HAP-1 (cell line): ENCODE measurements at regions of chr1 and their contacts with region 1.

Region 1: GRCh38 chr1:54519709-54520108 is 28.3 kb upstream of the ACOT11 start:
- DNase-seq: peak in 1 of 2 experiments; percentile 27
- H3K4me3 ChIP-seq: no peak overlapping the region
- H3K4me1 ChIP-seq: no peaks in the 10 kb centered on the region
- H3K27me3 ChIP-seq: no peaks in the 10 kb centered on the region

Region 2: GRCh38 chr1:54663725-54664124 is 144.0 kb after region 1 on chr1:
- in situ Hi-C with region 1: no loop called
- DNase-seq: no peak
- H3K4me3 ChIP-seq: no peak overlapping the region
- H3K4me1 ChIP-seq: peaks cover 3% of the 10 kb centered on the region; the same call in 1 of the 2 replicates
- H3K27me3 ChIP-seq: no peaks in the 10 kb centered on the region

Region 3: GRCh38 chr1:54791880-54792522 is 272.3 kb after region 1 on chr1:
- in situ Hi-C with region 1: loop called (anchors 10 kb)
- DNase-seq: peak in 1 of 2 experiments; percentile 64
- H3K4me3 ChIP-seq: no peak overlapping the region
- H3K4me1 ChIP-seq: no peaks in the 10 kb centered on the region
- H3K27me3 ChIP-seq: peaks cover 3% of the 10 kb centered on the region